Activated CD4-positive, alpha-beta memory T cell treated with anti-CD3 and anti-CD28 coated beads for 36 hours (primary cell): ENCODE measurements at regions of chr1 and their contacts with region 1.

Region 1: DNA sequence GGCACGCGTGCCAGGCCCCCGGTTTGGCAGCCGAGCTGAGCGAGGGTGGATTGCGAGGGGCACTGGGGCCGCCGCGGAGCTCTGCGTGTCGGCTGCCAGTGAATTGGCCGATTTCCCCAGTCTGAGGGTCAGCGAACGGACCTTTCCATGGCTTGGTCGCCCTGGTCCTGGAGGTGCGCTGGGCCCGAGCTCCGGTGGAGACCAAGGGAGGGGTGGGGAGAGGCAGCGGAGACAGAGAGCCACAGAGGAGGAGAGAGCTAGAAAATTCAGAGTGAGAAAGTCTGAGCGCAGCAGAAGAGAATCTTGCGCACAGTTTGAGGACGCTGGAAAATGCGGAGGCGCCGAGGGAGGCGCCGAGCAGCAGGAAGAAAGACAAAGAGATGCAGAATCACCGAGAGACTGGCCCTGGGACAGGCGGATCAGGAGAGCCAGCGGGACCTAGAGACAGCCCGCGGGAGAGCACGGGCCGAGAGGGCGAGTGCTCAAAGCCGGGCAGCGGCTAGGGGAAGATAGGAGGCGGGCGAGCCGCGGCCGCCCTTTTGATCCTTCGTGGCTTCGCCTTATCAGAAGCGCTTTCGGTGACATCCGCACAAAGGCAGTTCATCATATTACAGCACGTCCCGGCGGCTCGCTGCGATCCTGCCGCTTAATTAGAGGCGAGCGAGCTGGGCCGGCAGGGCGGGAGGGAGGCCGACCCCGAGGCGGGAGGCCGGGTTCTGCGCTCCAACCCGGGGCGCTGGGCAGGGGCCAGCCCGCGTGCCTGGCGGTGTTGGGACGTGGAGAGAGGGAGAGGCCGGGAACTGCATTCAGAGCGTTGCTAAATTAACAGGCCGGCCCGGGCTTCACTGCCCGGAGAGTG is 12.7 kb downstream of the PAX7 start:
- DNase-seq: no peak
- H3K4me3 Mint-ChIP-seq: no peak overlapping the region
- H3K27ac Mint-ChIP-seq: no peak overlapping the region
- H3K4me1 Mint-ChIP-seq: peaks cover 43% of the 10 kb centered on the region
- H3K27me3 Mint-ChIP-seq: peaks cover 81% of the 10 kb centered on the region

Region 2: DNA sequence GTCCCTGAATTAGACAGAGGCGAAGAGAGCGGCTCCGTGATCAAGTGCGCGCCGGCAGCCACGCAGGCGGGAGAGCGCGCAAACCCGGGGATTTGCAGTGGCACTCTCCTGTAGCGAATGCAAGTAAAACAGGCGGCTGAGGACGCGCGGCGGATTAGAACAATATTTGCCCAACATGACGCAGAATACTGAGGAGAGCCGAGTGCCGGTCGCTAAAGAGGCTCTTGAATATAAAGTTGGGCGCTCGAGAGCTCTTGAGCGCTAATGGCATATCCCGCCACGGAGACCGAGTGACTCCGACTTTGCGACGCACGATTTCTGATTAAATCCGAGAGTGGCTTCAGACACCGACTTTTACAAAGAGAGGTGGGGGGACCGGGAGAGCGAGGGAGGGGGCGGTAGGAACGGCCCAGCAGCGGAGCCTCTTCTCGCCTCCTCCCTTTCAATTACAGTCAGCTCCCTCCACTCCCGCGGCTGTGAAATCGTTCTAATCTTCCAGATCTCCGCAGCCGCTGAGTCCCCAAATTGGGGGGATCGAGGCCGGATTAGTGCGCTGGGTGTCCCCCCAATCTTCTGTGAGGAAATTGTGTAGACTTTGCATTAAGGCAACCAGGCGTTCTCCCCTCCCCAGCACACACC is 10.5 kb before region 1 on chr1:
- CTCF ChIA-PET with region 1: no interaction called
- POLR2A ChIA-PET with region 1: no interaction called
- intact Hi-C with region 1: loop called (anchors 1 kb)
- DNase-seq: no peak
- H3K4me3 Mint-ChIP-seq: no peak overlapping the region
- H3K27ac Mint-ChIP-seq: peak overlapping the region; percentile 23
- H3K4me1 Mint-ChIP-seq: peaks cover 10% of the 10 kb centered on the region
- H3K27me3 Mint-ChIP-seq: peaks cover 88% of the 10 kb centered on the region

Region 3: GRCh38 chr1:18719786-18720451 is 76.5 kb after region 1 on chr1:
- CTCF ChIA-PET with region 1: no interaction called
- POLR2A ChIA-PET with region 1: no interaction called
- intact Hi-C with region 1: no loop called
- DNase-seq: no peak
- H3K4me3 Mint-ChIP-seq: no peak overlapping the region
- H3K27ac Mint-ChIP-seq: no peak overlapping the region
- H3K4me1 Mint-ChIP-seq: peaks cover 8% of the 10 kb centered on the region
- H3K27me3 Mint-ChIP-seq: peaks cover 54% of the 10 kb centered on the region